ENCODE measurements at regions of chr20 and their contacts with region 1.

Region 1: DNA sequence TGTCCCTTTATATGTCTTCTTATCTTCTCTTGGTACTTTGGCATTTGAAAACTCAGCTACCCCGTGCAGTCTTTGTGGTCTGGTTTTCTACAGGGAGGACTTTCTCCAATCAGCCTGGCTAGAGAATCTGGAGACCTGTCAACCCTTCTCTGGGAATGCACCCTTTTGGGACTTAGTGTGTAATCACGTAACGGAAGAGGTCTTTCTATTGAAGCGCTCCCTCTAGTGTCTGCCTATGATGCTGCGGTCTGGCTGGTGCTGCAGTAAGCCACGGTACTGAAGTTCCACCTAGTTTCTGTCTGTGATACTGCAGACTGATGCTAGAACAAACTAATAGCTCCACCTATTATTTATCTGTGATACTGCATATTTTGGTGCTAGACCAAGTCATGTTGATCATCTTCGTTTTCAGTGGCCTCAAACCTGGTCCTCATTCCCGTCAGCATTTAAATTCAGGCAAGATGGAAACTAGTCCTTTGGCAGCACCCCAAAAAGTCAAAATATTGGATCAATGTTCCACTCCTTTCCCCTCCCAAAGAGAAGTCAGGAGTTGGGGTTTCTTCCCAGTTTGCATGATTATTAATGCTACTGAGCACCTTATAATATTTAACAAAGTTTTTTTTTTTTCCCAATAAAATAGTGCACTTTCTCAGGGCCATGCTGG is 12.5 kb upstream of the SIRPB2 start:
- DNase-seq: peak; percentile 94
- H3K4me3 ChIP-seq: no peak overlapping the region
- H3K27ac ChIP-seq: peak overlapping the region; percentile 37
- H3K4me1 ChIP-seq: peaks cover 67% of the 10 kb centered on the region
- H3K27me3 ChIP-seq: no peaks in the 10 kb centered on the region
- CTCF ChIP-seq: peak; percentile 100

Region 2: GRCh38 chr20:610130-611046 is 893.3 kb before region 1 on chr20 and contains the start of gene TCF15:
- CTCF ChIA-PET with region 1: no interaction called
- dilution Hi-C with region 1: no loop called
- in situ Hi-C with region 1: no loop called
- intact Hi-C with region 1: no loop called
- DNase-seq: peak; percentile 4
- H3K4me3 ChIP-seq: no peak within 1 kb of the TSS
- H3K27ac ChIP-seq: no peak within 1 kb of the TSS
- H3K4me1 ChIP-seq: no peaks in the 10 kb centered on the region
- H3K27me3 ChIP-seq: peaks cover 51% of the 10 kb centered on the region
- CTCF ChIP-seq: no peak
- total RNA-seq, gene TCF15: not detected

Region 3: GRCh38 chr20:973785-974194 is 529.9 kb before region 1 on chr20:
- CTCF ChIA-PET with region 1: no interaction called
- dilution Hi-C with region 1: no loop called
- in situ Hi-C with region 1: no loop called
- intact Hi-C with region 1: no loop called
- DNase-seq: peak; percentile 30
- H3K4me3 ChIP-seq: no peak overlapping the region
- H3K27ac ChIP-seq: no peak overlapping the region
- H3K4me1 ChIP-seq: no peaks in the 10 kb centered on the region
- H3K27me3 ChIP-seq: no peaks in the 10 kb centered on the region
- CTCF ChIP-seq: peak; percentile 60 to 62

Region 4: GRCh38 chr20:1313236-1313964 is 190.3 kb before region 1 on chr20:
- CTCF ChIA-PET with region 1: interaction called, 5 read pairs
- dilution Hi-C with region 1: no loop called
- in situ Hi-C with region 1: no loop called
- intact Hi-C with region 1: loop called (anchors 1 kb)
- DNase-seq: peak; percentile 37
- H3K4me3 ChIP-seq: peak overlapping the region in 2 of 3 experiments; percentile 17 to 27
- H3K27ac ChIP-seq: no peak overlapping the region
- H3K4me1 ChIP-seq: peaks cover 2% of the 10 kb centered on the region
- H3K27me3 ChIP-seq: no peaks in the 10 kb centered on the region
- CTCF ChIP-seq: peak; percentile 83 to 95

Region 5: GRCh38 chr20:1392823-1393506 is 110.7 kb before region 1 on chr20 and contains the start of gene FKBP1A:
- CTCF ChIA-PET with region 1: interaction called, 4 read pairs
- dilution Hi-C with region 1: no loop called
- in situ Hi-C with region 1: no loop called
- intact Hi-C with region 1: loop called (anchors 5 kb)
- DNase-seq: peak; percentile 92
- H3K4me3 ChIP-seq: peak within 1 kb of the TSS; percentile 57 to 84 (median 76)
- H3K27ac ChIP-seq: peak within 1 kb of the TSS; percentile 57
- H3K4me1 ChIP-seq: peaks cover 43% of the 10 kb centered on the region
- H3K27me3 ChIP-seq: no peaks in the 10 kb centered on the region
- CTCF ChIP-seq: no peak
- total RNA-seq, gene FKBP1A: 139 to 425 TPM

Region 6: DNA sequence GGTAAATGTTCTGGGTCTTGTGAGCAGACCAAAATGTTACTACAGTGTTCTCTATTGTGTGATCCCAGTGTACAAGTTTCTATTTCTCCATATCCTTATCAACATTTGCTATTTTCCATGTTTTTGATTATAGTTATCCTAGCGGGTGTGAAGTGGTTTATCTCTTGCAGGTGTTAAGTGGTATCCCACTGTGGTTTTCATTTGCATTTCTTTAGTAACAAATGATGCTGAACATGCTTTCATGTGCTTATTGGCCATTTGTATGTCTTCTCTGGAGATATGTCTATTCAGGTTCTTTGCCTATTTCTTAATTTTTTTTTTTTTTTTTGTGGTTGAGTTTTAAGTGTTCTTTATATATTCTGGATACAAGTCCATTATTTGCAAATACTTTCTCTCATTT is 72.5 kb before region 1 on chr20:
- CTCF ChIA-PET with region 1: no interaction called
- dilution Hi-C with region 1: no loop called
- in situ Hi-C with region 1: no loop called
- intact Hi-C with region 1: no loop called
- DNase-seq: no peak
- H3K4me3 ChIP-seq: no peak overlapping the region
- H3K27ac ChIP-seq: no peak overlapping the region
- H3K4me1 ChIP-seq: peaks cover 19% of the 10 kb centered on the region
- H3K27me3 ChIP-seq: no peaks in the 10 kb centered on the region
- CTCF ChIP-seq: no peak

Region 7: GRCh38 chr20:1466211-1467081 is 37.2 kb before region 1 on chr20 and contains the start of gene NSFL1C:
- CTCF ChIA-PET with region 1: interaction called, 6 read pairs
- dilution Hi-C with region 1: no loop called
- in situ Hi-C with region 1: no loop called
- intact Hi-C with region 1: loop called (anchors 1 kb)
- DNase-seq: peak; percentile 93
- H3K4me3 ChIP-seq: peak within 1 kb of the TSS; percentile 83 to 95 (median 83)
- H3K27ac ChIP-seq: peak within 1 kb of the TSS; percentile 94
- H3K4me1 ChIP-seq: peaks cover 39% of the 10 kb centered on the region
- H3K27me3 ChIP-seq: no peaks in the 10 kb centered on the region
- CTCF ChIP-seq: peak; percentile 70 to 92
- total RNA-seq, gene NSFL1C: 46.3 to 105 TPM

Region 8: GRCh38 chr20:1474825-1475603 is 28.7 kb before region 1 on chr20:
- CTCF ChIA-PET with region 1: interaction called, 14 read pairs
- dilution Hi-C with region 1: no loop called
- in situ Hi-C with region 1: no loop called
- intact Hi-C with region 1: loop called (anchors 1 kb)
- DNase-seq: peak; percentile 95
- H3K4me3 ChIP-seq: no peak overlapping the region
- H3K27ac ChIP-seq: peak overlapping the region; percentile 51
- H3K4me1 ChIP-seq: peaks cover 60% of the 10 kb centered on the region
- H3K27me3 ChIP-seq: no peaks in the 10 kb centered on the region
- CTCF ChIP-seq: peak; percentile 75 to 87

Region 9: GRCh38 chr20:1489764-1490450 is 13.8 kb before region 1 on chr20:
- CTCF ChIA-PET with region 1: no interaction called
- dilution Hi-C with region 1: no loop called
- in situ Hi-C with region 1: no loop called
- intact Hi-C with region 1: loop called (anchors 1 kb)
- DNase-seq: peak; percentile 88
- H3K4me3 ChIP-seq: no peak overlapping the region
- H3K27ac ChIP-seq: peak overlapping the region; percentile 83
- H3K4me1 ChIP-seq: peaks cover 33% of the 10 kb centered on the region
- H3K27me3 ChIP-seq: no peaks in the 10 kb centered on the region
- CTCF ChIP-seq: no peak

Region 10: DNA sequence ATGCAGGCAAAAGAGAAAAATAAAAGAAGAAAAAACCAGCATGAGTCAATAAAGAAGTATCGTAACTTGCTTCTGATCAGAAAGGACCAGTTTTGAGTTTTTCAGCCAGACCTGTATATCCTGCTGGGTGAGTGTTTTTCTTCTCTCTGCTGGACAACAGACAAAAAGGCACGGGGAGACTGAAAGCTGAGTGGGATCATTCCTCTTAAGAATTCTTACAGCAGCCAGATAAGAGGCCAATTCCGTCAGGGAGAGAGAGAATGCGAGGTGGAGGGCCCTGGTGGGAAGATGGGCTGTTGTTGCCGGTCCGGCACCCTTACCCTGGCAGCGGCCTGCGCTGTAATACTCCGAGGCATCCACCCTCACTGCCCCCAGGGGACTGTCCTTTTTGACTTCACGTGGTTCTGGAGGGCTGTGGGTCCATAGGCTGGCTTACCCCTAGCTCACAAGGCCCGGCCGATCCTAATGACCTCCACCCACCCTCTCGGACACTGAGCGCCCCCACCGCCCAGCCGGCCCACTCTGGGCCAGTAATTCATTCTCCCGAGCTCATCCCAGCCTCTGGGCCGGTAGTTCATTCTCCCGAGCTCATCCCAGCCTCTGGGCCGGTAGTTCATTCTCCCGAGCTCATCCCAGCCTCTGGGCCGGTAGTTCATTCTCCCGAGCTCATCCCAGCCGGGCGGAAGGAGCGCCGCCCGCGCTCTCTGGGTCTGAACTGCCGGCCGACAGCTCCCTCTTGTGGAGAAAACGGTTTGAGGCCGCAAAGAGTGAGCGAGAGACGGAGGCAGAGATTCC is 273.2 kb after region 1 on chr20:
- CTCF ChIA-PET with region 1: interaction called, 14 read pairs
- dilution Hi-C with region 1: no loop called
- in situ Hi-C with region 1: loop called (anchors 10 to 25 kb)
- intact Hi-C with region 1: no loop called
- DNase-seq: peak; percentile 80
- H3K4me3 ChIP-seq: peak overlapping the region; percentile 48 to 63 (median 57)
- H3K27ac ChIP-seq: peak overlapping the region; percentile 37
- H3K4me1 ChIP-seq: peaks cover 14% of the 10 kb centered on the region
- H3K27me3 ChIP-seq: no peaks in the 10 kb centered on the region
- CTCF ChIP-seq: peak; percentile 62 to 87

Measured in mammary epithelial cell (primary cell).